ENCODE measurements at regions of chr1 and their contacts with region 1.

Region 1: DNA sequence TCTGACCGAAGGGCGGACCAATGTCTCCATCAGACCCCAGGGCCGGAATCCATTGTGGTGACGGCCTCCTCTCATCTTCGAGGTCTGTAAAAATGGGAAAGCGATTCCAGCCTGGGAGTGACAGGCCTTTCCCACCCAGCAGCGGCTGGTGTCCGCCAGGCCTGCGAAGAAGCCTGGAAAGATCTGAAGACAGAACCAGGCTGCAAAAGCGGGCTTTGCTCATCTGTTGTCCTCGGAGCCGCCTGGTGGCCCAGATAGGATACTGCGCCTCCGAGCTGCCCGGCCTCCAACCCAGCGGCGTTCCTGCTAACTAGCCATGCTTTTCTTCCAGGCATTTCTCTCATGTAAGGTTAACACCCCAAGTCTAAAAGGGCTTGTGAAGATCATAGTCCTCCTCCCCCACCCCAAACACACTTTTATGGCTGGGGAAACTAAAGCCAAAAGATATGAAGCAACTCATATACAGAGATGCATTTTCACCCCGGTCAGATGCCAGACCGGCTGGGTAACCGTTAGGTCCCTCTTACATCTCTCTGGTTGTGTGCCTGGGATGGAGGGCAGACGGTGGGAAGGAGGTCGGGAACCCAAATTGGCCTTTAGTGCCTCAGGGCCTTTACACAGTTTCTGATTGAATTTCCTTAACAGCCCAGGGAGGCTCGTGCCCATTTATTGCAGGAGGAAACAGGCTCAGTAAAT is 1.9 kb upstream of the DHRS3 start:
- H3K4me3 ChIP-seq: no peak overlapping the region
- H3K27ac ChIP-seq: peak overlapping the region; percentile 99
- H3K4me1 ChIP-seq: peaks cover 9% of the 10 kb centered on the region
- CTCF ChIP-seq: peak; percentile 88

Region 2: DNA sequence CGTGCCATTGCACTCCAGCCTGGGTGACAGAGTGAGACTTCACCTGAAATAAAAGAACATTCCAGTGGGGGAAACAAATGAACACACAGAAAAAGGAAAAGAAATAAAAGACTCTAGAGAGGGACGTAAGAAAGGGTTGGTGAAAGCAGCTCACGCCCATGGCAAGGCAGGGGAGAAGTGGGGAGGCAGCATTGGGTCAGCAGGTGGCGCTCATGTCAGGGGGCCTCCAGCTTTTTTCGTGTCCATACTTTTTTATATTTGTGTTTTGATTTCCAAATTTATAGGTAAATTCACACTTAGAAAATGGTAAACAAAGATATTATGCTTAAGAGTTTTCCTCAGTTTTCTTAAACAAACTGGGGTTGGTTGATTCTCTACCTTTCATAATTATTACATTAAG is 344.6 kb before region 1 on chr1:
- CTCF ChIA-PET with region 1: interaction called, 26 read pairs
- POLR2A ChIA-PET with region 1: interaction called, 3 read pairs
- H3K4me3 ChIP-seq: no peak overlapping the region
- H3K27ac ChIP-seq: no peak overlapping the region
- H3K4me1 ChIP-seq: no peaks in the 10 kb centered on the region
- CTCF ChIP-seq: peak; percentile 26; the same call in 1 of the 2 replicates

Region 3: GRCh38 chr1:12314333-12314903 is 305.5 kb before region 1 on chr1:
- CTCF ChIA-PET with region 1: interaction called, 45 read pairs
- POLR2A ChIA-PET with region 1: interaction called, 3 read pairs
- H3K4me3 ChIP-seq: no peak overlapping the region
- H3K27ac ChIP-seq: no peak overlapping the region
- H3K4me1 ChIP-seq: no peaks in the 10 kb centered on the region
- CTCF ChIP-seq: no peak

Region 4: GRCh38 chr1:12477936-12478611 is 141.9 kb before region 1 on chr1:
- CTCF ChIA-PET with region 1: interaction called, 15 read pairs
- POLR2A ChIA-PET with region 1: interaction called, 50 read pairs
- H3K4me3 ChIP-seq: no peak overlapping the region
- H3K27ac ChIP-seq: peak overlapping the region; percentile 73
- H3K4me1 ChIP-seq: peaks cover 32% of the 10 kb centered on the region
- CTCF ChIP-seq: no peak

Region 5: DNA sequence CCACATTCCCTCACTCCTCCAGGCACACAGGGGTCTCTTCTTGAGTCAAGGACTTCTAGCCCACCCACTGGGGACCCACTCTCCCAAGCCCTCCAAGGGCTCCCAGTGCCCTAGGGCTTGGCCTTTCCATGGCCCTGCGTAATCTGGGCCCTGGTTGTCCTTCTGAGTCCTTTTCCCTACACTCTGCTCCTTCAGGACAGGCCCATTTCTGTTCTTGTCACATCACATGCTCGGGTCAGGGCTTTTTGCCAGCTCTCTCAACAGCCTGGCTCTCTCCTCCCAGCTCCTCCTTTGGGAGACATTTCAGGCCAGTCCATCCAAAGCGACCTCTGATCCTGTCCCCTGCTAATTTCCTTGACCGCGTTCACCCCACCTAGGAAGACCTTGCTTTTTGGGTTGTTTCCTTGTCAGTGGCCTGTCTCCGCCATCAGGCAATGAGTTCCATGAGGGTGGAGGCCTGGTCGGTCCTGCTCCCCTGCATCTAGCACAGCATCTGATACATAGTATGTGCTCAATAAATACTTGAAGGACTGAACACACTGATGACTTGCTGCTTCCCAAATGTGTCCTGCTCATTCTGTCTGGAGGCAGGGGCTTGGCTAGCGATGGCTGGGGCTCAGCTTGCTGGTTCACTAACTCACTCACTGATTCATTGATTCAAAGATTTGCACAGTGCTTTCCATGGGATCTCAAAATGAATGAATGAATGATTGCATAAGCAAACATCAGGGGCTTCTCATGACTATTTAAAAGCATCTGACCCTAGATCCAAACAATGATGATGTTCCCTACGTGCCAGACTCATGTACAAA is 46.7 kb before region 1 on chr1:
- CTCF ChIA-PET with region 1: interaction called, 6 read pairs
- POLR2A ChIA-PET with region 1: interaction called, 13 read pairs
- H3K4me3 ChIP-seq: no peak overlapping the region
- H3K27ac ChIP-seq: no peak overlapping the region
- H3K4me1 ChIP-seq: no peaks in the 10 kb centered on the region
- CTCF ChIP-seq: no peak

Region 6: GRCh38 chr1:12596007-12596821 is 23.7 kb before region 1 on chr1:
- CTCF ChIA-PET with region 1: interaction called, 28 read pairs
- POLR2A ChIA-PET with region 1: interaction called, 101 read pairs
- H3K4me3 ChIP-seq: peak overlapping the region; percentile 23
- H3K27ac ChIP-seq: peak overlapping the region; percentile 83
- H3K4me1 ChIP-seq: peaks cover 8% of the 10 kb centered on the region
- CTCF ChIP-seq: no peak

Region 7: GRCh38 chr1:12604114-12604874 is 15.6 kb before region 1 on chr1:
- CTCF ChIA-PET with region 1: interaction called, 28 read pairs
- POLR2A ChIA-PET with region 1: interaction called, 47 read pairs
- H3K4me3 ChIP-seq: no peak overlapping the region
- H3K27ac ChIP-seq: no peak overlapping the region
- H3K4me1 ChIP-seq: no peaks in the 10 kb centered on the region
- CTCF ChIP-seq: no peak

Region 8: GRCh38 chr1:12630946-12631530 is 11.1 kb after region 1 on chr1:
- CTCF ChIA-PET with region 1: no interaction called
- POLR2A ChIA-PET with region 1: no interaction called
- H3K4me3 ChIP-seq: no peak overlapping the region
- H3K27ac ChIP-seq: no peak overlapping the region
- H3K4me1 ChIP-seq: no peaks in the 10 kb centered on the region
- CTCF ChIP-seq: no peak